Prostate gland (tissue), 2 donors: ENCODE measurements at regions of chr20 and their contacts with region 1.

Region 1: DNA sequence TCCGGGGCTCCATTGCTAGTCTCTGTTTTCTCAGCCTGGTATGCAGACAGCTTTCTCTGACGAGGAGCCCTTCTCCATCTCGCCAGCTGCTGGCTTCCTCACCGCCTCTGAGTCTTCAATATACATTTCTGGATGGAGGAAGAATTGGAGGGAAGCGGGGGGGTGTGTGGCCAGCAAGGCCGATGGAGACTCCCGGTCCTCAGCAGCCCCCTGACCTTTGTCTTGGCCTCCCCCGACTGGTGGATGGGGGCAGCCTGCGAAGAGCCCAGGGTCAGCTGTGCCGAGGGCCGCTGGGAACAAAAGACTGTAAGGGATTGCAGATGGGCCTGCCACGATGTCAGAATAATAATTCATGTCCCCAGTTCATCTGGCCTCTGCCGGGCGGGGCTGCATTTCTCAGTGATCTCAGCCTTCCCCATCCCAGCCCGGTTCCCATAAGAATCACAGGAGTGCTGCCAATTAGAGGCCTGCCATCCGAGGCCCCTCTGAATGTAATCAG is 54.3 kb upstream of the STX16 start:
- DNase-seq: no peak
- H3K4me3 ChIP-seq: no peak overlapping the region
- H3K27ac ChIP-seq: no peak overlapping the region
- H3K4me1 ChIP-seq: no peaks in the 10 kb centered on the region
- H3K27me3 ChIP-seq: no peaks in the 10 kb centered on the region
- CTCF ChIP-seq: no peak
- POLR2A ChIP-seq: no peak

Region 2: DNA sequence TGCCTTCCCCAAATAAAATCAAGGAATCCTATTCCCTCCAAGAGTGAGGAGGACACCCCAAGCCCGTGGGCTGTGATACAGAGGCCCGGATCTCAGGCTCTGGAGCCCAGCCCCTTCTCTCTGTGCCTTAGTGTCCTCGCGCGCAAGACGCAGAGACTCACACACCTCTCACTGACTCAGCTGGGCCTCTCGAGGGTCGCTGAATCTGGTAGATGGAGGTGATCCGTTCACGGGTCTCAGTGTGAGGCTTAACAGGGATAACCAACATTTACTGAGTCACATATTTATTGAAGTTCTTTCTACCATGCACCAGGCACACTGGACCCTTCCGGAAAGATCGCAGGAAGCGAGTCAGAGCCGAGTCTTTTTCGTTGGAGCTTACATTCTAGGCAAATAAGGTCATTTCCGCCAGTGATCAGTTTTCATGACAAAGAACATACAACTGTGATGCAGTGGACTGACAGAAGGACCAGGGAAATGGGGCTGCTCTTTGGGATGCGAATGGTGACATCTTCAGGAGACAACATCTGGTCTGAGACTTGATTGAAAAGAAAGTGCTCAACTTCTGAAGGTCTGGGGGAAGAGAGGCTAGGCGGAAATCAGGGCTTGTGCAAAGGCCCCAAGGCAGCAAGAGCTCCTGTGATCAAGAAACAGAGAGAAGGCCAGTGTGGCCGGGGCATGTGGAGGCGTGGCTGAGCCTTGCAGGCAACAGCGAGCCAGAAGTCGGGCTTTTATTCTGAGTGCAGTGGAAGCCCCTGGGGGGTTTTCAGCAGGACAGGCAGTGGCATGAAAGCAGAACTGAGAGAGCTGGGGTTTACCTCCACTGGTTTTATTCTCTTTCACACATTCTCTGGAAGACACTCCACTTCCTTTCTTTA is 138.4 kb before region 1 on chr20:
- intact Hi-C with region 1: no loop called
- DNase-seq: no peak
- H3K4me3 ChIP-seq: no peak overlapping the region
- H3K27ac ChIP-seq: no peak overlapping the region
- H3K4me1 ChIP-seq: no peaks in the 10 kb centered on the region
- H3K27me3 ChIP-seq: no peaks in the 10 kb centered on the region
- CTCF ChIP-seq: no peak
- POLR2A ChIP-seq: no peak

Region 3: GRCh38 chr20:58553841-58554240 is 43.0 kb before region 1 on chr20:
- intact Hi-C with region 1: loop called (anchors 2 kb)
- DNase-seq: no peak
- H3K4me3 ChIP-seq: no peak overlapping the region
- H3K27ac ChIP-seq: no peak overlapping the region
- H3K4me1 ChIP-seq: no peaks in the 10 kb centered on the region
- H3K27me3 ChIP-seq: no peaks in the 10 kb centered on the region
- CTCF ChIP-seq: no peak
- POLR2A ChIP-seq: no peak

Region 4: DNA sequence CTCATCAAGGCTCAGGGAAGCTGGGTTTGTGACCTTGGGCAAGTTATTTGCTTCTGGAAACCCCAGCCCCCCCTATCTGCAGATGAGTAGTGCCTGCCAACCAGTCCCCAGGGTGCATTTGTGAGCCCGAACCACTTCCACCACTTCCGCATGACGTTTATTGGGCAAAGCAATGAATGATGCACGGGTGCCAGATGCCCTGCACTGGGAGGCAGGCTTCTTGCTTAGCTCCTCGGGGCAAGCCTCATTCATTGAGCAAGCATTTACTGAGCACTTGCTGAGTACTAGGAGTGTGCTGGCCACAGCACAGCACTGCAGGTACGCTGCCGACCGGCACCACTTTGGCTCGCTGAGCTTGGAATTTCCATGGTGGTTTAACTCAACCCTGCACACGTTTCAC is 193.7 kb after region 1 on chr20:
- intact Hi-C with region 1: no loop called
- DNase-seq: no peak
- H3K4me3 ChIP-seq: no peak overlapping the region
- H3K27ac ChIP-seq: no peak overlapping the region
- H3K4me1 ChIP-seq: no peaks in the 10 kb centered on the region
- H3K27me3 ChIP-seq: no peaks in the 10 kb centered on the region
- CTCF ChIP-seq: no peak
- POLR2A ChIP-seq: no peak